K562 (cell line): ENCODE measurements at regions of chr14 and their contacts with region 1.

Region 1: GRCh38 chr14:102316743-102317563 is 2.6 kb upstream of the ZNF839 start:
- DNase-seq: peak; percentile 83 to 91 (median 86)
- ATAC-seq: peak; percentile 85
- H3K4me3 ChIP-seq: peak overlapping the region; percentile 54
- H3K27ac ChIP-seq: peak overlapping the region; percentile 77
- H3K4me1 ChIP-seq: peaks cover 27 to 32% of the 10 kb centered on the region in 2 experiments; a peak in 4 of 5 replicates
- H3K27me3 ChIP-seq: no peaks in the 10 kb centered on the region
- CTCF ChIP-seq: peak; percentile 66 to 71 (median 68)
- EP300 ChIP-seq: peak; percentile 18; the same call in 1 of the 2 replicates
- POLR2A ChIP-seq: no peak
- RAD21 ChIP-seq: no peak

Region 2: GRCh38 chr14:101707068-101707842 is 609.7 kb before region 1 on chr14:
- CTCF ChIA-PET with region 1: no interaction called
- POLR2A ChIA-PET with region 1: no interaction called
- in situ Hi-C with region 1: loop called (anchors 10 kb)
- intact Hi-C with region 1: loop called (anchors 5 kb)
- DNase-seq: peak in 3 of 4 experiments; percentile 31 to 87 (median 42)
- ATAC-seq: peak; percentile 36
- H3K4me3 ChIP-seq: no peak overlapping the region
- H3K27ac ChIP-seq: peak overlapping the region; percentile 99
- H3K4me1 ChIP-seq: peaks cover 41 to 56% of the 10 kb centered on the region in 2 experiments
- H3K27me3 ChIP-seq: no peaks in the 10 kb centered on the region
- CTCF ChIP-seq: peak; percentile 66 to 82 (median 79)
- EP300 ChIP-seq: peak; percentile 43; the same call in 1 of the 2 replicates
- POLR2A ChIP-seq: no peak
- RAD21 ChIP-seq: peak; percentile 81 to 86

Region 3: DNA sequence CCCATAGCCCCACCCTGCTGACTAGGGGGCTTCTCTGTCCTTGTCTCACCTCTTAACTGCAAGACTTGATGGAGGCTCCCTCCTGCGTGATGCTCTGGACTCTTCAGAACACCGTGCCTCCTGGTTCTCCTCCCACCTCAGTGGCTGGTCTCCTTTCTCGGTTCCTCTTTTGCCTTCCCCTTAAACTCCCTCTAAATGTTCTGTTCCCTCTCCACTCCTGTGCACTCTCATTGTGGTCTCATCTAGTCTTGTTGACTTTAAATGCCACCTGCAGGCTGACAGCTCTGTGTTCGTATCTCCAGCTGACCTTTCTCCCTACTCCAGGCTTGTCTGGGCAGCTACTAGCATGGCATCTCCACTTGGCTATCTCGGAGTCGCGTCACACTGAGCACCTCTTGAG is 324.2 kb before region 1 on chr14:
- CTCF ChIA-PET with region 1: no interaction called
- POLR2A ChIA-PET with region 1: no interaction called
- in situ Hi-C with region 1: no loop called
- intact Hi-C with region 1: no loop called
- DNase-seq: no peak
- ATAC-seq: no peak
- H3K4me3 ChIP-seq: no peak overlapping the region
- H3K27ac ChIP-seq: no peak overlapping the region
- H3K4me1 ChIP-seq: no peaks in the 10 kb centered on the region
- H3K27me3 ChIP-seq: no peaks in the 10 kb centered on the region
- CTCF ChIP-seq: no peak
- EP300 ChIP-seq: no peak
- POLR2A ChIP-seq: no peak
- RAD21 ChIP-seq: no peak

Region 4: DNA sequence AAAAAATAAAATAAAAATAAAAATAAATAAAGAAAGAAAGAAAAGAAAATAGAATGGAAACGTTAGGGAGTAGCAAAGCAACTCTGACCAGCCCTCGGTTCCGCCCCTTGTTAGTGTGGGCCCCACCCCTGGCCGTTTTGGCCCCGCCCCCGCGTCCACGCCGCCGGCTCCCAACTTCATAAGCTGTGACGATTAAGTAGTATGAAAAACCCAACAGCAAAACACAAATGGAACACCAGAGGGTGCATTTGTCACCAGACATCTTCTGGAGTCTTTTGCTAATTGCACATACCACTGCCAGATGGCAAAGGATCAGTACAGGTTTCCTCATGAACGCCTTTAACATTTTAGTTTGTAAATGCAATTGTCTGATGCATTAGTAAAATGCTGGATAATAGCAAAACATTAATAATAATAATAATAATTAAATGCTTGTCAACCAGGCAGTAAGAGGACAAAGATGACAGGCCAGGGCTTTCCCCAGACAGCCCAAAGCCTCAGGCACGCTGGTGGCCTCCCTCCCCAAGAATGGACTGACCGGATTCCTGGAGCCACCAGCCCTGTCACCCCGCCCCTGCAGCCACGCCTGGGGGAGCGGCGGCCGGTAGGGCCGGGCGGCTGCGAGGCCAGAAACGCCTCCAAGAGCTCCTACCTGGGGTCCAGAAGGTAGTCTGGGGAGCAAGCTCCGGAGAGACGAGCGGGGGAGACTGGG is 253.7 kb before region 1 on chr14:
- CTCF ChIA-PET with region 1: no interaction called
- POLR2A ChIA-PET with region 1: no interaction called
- in situ Hi-C with region 1: loop called (anchors 10 kb)
- intact Hi-C with region 1: loop called (anchors 5 kb)
- DNase-seq: peak; percentile 80 to 87 (median 86)
- ATAC-seq: peak; percentile 98
- H3K4me3 ChIP-seq: no peak overlapping the region
- H3K27ac ChIP-seq: peak overlapping the region; percentile 45
- H3K4me1 ChIP-seq: peaks cover 6 to 12% of the 10 kb centered on the region in 2 experiments; a peak in 3 of 5 replicates
- H3K27me3 ChIP-seq: no peaks in the 10 kb centered on the region
- CTCF ChIP-seq: peak; percentile 37 to 64 (median 63); a peak in 5 of 6 replicates
- EP300 ChIP-seq: no peak
- POLR2A ChIP-seq: no peak
- RAD21 ChIP-seq: peak; percentile 48 to 66

Region 5: GRCh38 chr14:102235275-102235897 is 81.6 kb before region 1 on chr14:
- CTCF ChIA-PET with region 1: interaction called, 15 read pairs
- POLR2A ChIA-PET with region 1: no interaction called
- in situ Hi-C with region 1: loop called (anchors 5 kb)
- intact Hi-C with region 1: loop called (anchors 1 kb)
- DNase-seq: peak; percentile 82 to 86 (median 83)
- ATAC-seq: peak; percentile 99
- H3K4me3 ChIP-seq: no peak overlapping the region
- H3K27ac ChIP-seq: no peak overlapping the region
- H3K4me1 ChIP-seq: peaks cover 4 to 12% of the 10 kb centered on the region in 2 experiments; a peak in 3 of 5 replicates
- H3K27me3 ChIP-seq: no peaks in the 10 kb centered on the region
- CTCF ChIP-seq: peak; percentile 75 to 81 (median 80)
- EP300 ChIP-seq: no peak
- POLR2A ChIP-seq: no peak
- RAD21 ChIP-seq: peak; percentile 51 to 74

Region 6: GRCh38 chr14:102516531-102517415 is 199.8 kb after region 1 on chr14:
- CTCF ChIA-PET with region 1: no interaction called
- POLR2A ChIA-PET with region 1: no interaction called
- in situ Hi-C with region 1: loop called (anchors 10 kb)
- intact Hi-C with region 1: loop called (anchors 5 kb)
- DNase-seq: peak; percentile 51 to 78 (median 76)
- ATAC-seq: peak; percentile 88
- H3K4me3 ChIP-seq: peak overlapping the region; percentile 61
- H3K27ac ChIP-seq: peak overlapping the region; percentile 81
- H3K4me1 ChIP-seq: peaks cover 0 to 27% of the 10 kb centered on the region in 2 experiments; a peak in 2 of 5 replicates
- H3K27me3 ChIP-seq: no peaks in the 10 kb centered on the region
- CTCF ChIP-seq: peak; percentile 60 to 86 (median 71)
- EP300 ChIP-seq: no peak
- POLR2A ChIP-seq: no peak
- RAD21 ChIP-seq: peak; percentile 82 to 92